ENCODE measurements at regions of chr3 and their contacts with region 1.

Region 1: GRCh38 chr3:69791919-69792399 is 52.7 kb downstream of the MITF start:
- DNase-seq: no peak
- ATAC-seq: peak; percentile 33 to 66 (median 59)
- H3K4me3 ChIP-seq: peak overlapping the region in 3 of 12 donors; percentile 6 to 14 (median 7)
- H3K27ac ChIP-seq: peak overlapping the region in 10 of 12 donors; percentile 26 to 72 (median 45)
- H3K4me1 ChIP-seq: peaks cover 11 to 40% (median 30%) of the 10 kb centered on the region in 12 donors
- H3K27me3 ChIP-seq: no peaks in the 10 kb centered on the region
- CTCF ChIP-seq: peak in 11 of 12 donors; percentile 28 to 73 (median 56)
- POLR2A ChIP-seq: no peak

Region 2: GRCh38 chr3:69691860-69692259 is 100.1 kb before region 1 on chr3:
- intact Hi-C with region 1: loop called (anchors 2 to 5 kb)
- DNase-seq: no peak
- ATAC-seq: no peak
- H3K4me3 ChIP-seq: no peak overlapping the region
- H3K27ac ChIP-seq: no peak overlapping the region
- H3K4me1 ChIP-seq: peaks cover 0 to 11% (median 0%) of the 10 kb centered on the region in 12 donors
- H3K27me3 ChIP-seq: no peaks in the 10 kb centered on the region
- CTCF ChIP-seq: no peak
- POLR2A ChIP-seq: no peak

Region 3: GRCh38 chr3:69739204-69740102 is 52.5 kb before region 1 on chr3 and contains the start of gene MITF:
- intact Hi-C with region 1: loop called in 7 of 10 experiments (anchors 2 to 10 kb)
- DNase-seq: peak; percentile 94 to 97 (median 95)
- ATAC-seq: peak; percentile 95 to 98 (median 98)
- H3K4me3 ChIP-seq: peak within 1 kb of the TSS; percentile 67 to 98 (median 84)
- H3K27ac ChIP-seq: peak within 1 kb of the TSS; percentile 79 to 94 (median 92)
- H3K4me1 ChIP-seq: peaks cover 0 to 51% (median 26%) of the 10 kb centered on the region in 12 donors
- H3K27me3 ChIP-seq: no peaks in the 10 kb centered on the region
- CTCF ChIP-seq: peak in 1 of 12 donors; percentile 6
- POLR2A ChIP-seq: peak; percentile 71 to 91
- total RNA-seq, gene MITF: 61.4 to 114 (median 86.9) TPM

Region 4: GRCh38 chr3:69855436-69856162 is 63.6 kb after region 1 on chr3:
- intact Hi-C with region 1: loop called in 7 of 10 experiments (anchors 5 to 10 kb)
- DNase-seq: no peak
- ATAC-seq: peak in 3 of 4 donors; percentile 41 to 69 (median 57)
- H3K4me3 ChIP-seq: no peak overlapping the region
- H3K27ac ChIP-seq: peak overlapping the region in 9 of 12 donors; percentile 4 to 64 (median 42)
- H3K4me1 ChIP-seq: peaks cover 0 to 55% (median 19%) of the 10 kb centered on the region in 12 donors
- H3K27me3 ChIP-seq: no peaks in the 10 kb centered on the region
- CTCF ChIP-seq: peak in 11 of 12 donors; percentile 26 to 64 (median 55)
- POLR2A ChIP-seq: no peak

Region 5: DNA sequence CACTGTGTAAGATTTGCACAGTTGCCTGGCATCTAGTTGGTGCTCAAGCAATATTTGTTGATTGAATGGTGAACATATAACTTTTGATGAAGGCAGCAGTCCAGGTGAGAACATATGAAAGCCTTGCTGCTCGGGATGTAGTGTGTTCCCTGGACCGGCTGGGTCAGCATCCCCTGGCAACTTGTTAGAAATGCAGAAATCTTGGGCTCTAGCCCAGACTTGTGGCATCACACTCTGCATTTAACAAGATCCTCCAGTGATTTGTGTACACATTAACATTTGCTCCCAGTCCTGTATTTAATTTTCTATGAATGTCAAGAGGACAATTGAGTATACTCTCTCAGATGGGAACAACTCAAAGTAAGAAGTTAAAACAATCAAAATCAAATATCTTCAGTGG is 138.6 kb after region 1 on chr3:
- intact Hi-C with region 1: loop called in 1 of 10 experiments (anchors 10 kb)
- DNase-seq: peak in 1 of 5 donors; percentile 32
- ATAC-seq: peak in 3 of 4 donors; percentile 23 to 54 (median 31)
- H3K4me3 ChIP-seq: no peak overlapping the region
- H3K27ac ChIP-seq: no peak overlapping the region
- H3K4me1 ChIP-seq: peaks cover 0 to 54% (median 12%) of the 10 kb centered on the region in 12 donors
- H3K27me3 ChIP-seq: no peaks in the 10 kb centered on the region
- CTCF ChIP-seq: no peak
- POLR2A ChIP-seq: no peak

Region 6: DNA sequence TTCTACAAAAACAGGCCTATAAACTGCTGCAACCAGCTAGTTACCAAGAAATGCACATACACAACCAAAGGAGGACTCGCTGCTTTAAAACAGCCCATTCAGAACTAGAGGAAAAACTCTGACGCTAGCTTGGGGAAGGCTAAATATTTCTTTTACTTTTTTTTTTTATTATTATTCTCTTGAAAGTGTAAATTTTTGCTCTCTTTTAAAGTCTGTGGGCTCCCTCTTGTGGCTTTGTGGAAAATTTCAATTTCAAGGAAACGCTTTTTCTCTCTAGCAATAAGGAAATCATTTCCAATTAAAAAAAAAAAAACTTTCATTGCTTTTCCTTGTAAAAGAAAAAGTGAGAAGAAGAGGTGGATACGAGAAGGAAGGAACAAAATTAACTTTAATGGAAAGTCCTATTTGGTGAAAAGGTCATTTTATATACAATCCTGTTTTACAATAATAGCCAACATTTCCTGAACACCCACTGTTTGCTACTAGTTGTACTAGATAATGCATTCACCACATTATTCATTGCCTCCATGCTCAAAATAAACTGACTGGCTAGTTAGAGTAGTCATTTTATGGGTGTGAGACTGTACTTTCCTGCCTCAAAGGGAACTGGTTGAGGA is 156.4 kb after region 1 on chr3:
- intact Hi-C with region 1: loop called in 2 of 10 experiments (anchors 5 to 10 kb)
- DNase-seq: no peak
- ATAC-seq: no peak
- H3K4me3 ChIP-seq: no peak overlapping the region
- H3K27ac ChIP-seq: peak overlapping the region in 1 of 12 donors; percentile 26
- H3K4me1 ChIP-seq: peaks cover 0 to 13% (median 1%) of the 10 kb centered on the region in 12 donors
- H3K27me3 ChIP-seq: no peaks in the 10 kb centered on the region
- CTCF ChIP-seq: peak; percentile 42 to 77 (median 60)
- POLR2A ChIP-seq: no peak

Measured in heart left ventricle (tissue), 16 donors.